ENCODE measurements at regions of chr14 and their contacts with region 1.

Region 1: GRCh38 chr14:79809849-79810612 is 401.3 kb downstream of the DIO2 start:
- DNase-seq: peak in 1 of 10 donors; percentile 39
- H3K4me3 ChIP-seq: no peak overlapping the region
- H3K27ac ChIP-seq: peak overlapping the region in 23 of 59 donors; percentile 1 to 60 (median 22)
- H3K27me3 ChIP-seq: no peaks in the 10 kb centered on the region
- CTCF ChIP-seq: peak in 55 of 56 donors; percentile 21 to 83 (median 62)

Region 2: DNA sequence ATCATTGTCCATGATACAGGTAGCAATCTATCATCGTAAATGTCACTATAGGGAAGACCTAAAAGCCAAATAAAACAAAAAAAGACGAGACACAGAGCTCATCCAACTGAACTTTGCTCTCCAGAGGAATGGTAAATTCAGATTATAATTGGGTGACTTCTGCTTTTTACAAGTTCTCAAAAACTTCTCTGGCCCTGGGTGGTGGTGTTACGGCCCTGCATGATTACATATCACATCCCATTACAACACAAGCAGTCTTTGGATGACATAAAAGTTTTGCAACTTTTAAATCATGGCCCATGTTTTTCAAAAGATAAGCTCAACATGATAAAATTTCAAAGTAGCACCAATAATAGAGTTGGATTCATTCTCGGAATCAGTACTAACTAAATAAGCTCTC is 101.7 kb after region 1 on chr14:
- intact Hi-C with region 1: loop called in 1 of 2 experiments (anchors 5 kb)
- DNase-seq: no peak
- H3K4me3 ChIP-seq: no peak overlapping the region
- H3K27ac ChIP-seq: no peak overlapping the region
- H3K27me3 ChIP-seq: no peaks in the 10 kb centered on the region
- CTCF ChIP-seq: no peak

Region 3: DNA sequence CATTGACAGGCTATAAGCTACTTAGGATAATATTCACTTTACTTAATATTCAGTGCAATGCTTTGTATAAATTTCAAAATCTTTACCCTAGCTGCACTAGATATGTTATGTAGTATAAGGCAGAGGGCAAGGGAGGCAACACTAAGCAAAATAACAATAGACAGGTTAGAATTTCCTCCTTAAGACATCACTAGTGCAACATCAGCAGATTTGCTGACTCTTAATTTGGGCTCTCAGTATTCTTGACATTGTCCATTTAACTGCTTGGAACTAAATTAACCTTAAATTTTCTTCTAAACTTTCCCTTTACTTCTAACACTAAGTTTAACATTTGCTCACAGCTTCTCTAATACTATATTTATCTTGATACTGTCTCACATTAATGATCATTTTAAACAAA is 127.4 kb after region 1 on chr14:
- intact Hi-C with region 1: no loop called
- DNase-seq: no peak
- H3K4me3 ChIP-seq: no peak overlapping the region
- H3K27ac ChIP-seq: no peak overlapping the region
- H3K27me3 ChIP-seq: no peaks in the 10 kb centered on the region
- CTCF ChIP-seq: no peak

Region 4: DNA sequence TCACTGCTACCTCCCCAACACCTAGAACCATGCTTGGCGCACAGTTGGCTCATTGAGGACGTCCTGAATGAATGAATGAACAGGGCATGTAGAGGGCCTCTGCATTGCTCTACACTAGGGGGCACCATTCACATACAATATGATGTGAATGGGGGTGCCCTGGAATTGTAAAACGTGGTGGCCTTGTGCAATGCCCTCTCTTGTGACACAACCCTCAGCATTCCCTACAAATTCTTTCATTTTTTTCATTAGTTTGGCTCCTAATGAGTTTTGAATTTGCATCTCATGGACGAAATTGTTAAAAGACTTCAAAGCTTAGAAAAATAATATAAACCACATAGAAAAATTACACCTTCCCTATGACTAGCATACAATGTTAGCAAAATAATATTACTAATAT is 403.6 kb after region 1 on chr14:
- intact Hi-C with region 1: loop called in 1 of 2 experiments (anchors 10 kb)
- DNase-seq: peak in 1 of 10 donors; percentile 17
- H3K4me3 ChIP-seq: no peak overlapping the region
- H3K27ac ChIP-seq: no peak overlapping the region
- H3K27me3 ChIP-seq: peaks cover 0 to 5% (median 0%) of the 10 kb centered on the region in 45 donors
- CTCF ChIP-seq: peak in 53 of 56 donors; percentile 11 to 63 (median 45)

Measured in dorsolateral prefrontal cortex (tissue), 120 donors.